Cardiac septum (tissue), 1 donor: ENCODE measurements at regions of chr11 and their contacts with region 1.

Region 1: GRCh38 chr11:62671575-62672389 is at the starts of genes LBHD1 and UQCC3:
- DNase-seq: peak; percentile 91
- total RNA-seq, gene LBHD1: 2.4 TPM
- total RNA-seq, gene UQCC3: 6.9 TPM

Region 2: DNA sequence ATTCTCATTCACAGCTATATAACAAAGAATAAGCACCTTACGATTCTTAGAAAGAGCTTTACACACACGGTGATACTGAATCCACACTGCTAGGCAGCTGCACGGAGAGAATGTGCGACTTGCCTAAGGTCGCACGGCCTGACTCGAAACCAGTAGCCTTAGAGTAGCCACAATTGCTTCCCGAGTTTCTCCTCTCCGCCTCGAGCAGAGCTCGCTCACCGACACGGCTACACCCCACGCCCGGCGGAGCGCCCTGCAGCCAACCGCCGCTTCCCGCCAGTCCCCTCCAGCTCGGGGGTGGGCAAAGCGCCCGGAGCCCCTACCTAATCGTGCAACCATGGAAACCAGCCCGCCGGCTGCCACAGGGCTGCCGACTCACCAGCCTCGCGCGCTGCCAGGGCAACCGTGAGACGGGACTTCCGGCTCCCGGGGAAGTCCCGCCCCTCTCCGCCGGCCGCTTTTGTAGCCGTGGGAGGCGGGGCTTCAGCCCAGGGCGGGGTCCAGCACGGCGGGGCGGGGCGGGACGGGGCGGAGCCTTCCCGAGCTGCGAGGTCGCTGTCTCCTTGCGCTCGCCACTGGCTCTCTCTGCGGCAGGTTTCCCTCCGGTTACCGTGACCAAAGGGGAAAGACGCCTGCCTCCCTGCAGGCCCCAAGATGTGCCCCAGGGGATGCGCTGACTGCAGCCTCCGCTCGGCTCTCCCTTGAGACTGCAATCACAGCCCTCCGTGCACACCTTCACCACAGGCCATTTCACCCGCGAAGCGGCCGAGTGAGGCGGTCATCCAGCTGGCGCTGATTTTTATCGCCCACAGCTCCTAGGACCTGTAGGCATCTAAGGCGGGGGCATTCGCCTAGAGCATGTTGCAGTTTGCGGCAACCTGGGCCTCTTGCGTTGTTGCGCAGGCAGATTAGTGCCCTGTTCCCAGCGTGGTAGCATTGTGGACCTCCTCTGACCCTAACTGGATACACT is 34.4 kb after region 1 on chr11:
- intact Hi-C with region 1: loop called (anchors 5 kb)
- DNase-seq: peak; percentile 98